ENCODE measurements at regions of chr16 and their contacts with region 1.

Region 1: GRCh38 chr16:23803591-23804123 is 32.1 kb upstream of the PRKCB start:
- DNase-seq: peak; percentile 78
- H3K4me3 ChIP-seq: peak overlapping the region in 1 of 4 donors; percentile 10
- H3K27ac ChIP-seq: no peak overlapping the region
- H3K4me1 ChIP-seq: peaks cover 0 to 6% (median 0%) of the 10 kb centered on the region in 4 donors
- H3K27me3 ChIP-seq: no peaks in the 10 kb centered on the region
- CTCF ChIP-seq: peak in 3 of 4 experiments; percentile 30 to 56 (median 35)
- EP300 ChIP-seq: no peak
- POLR2A ChIP-seq: no peak

Region 2: GRCh38 chr16:23728112-23728477 is 75.6 kb before region 1 on chr16:
- intact Hi-C with region 1: no loop called
- DNase-seq: no peak
- H3K4me3 ChIP-seq: no peak overlapping the region
- H3K27ac ChIP-seq: no peak overlapping the region
- H3K4me1 ChIP-seq: no peaks in the 10 kb centered on the region
- H3K27me3 ChIP-seq: peaks cover 0 to 13% (median 0%) of the 10 kb centered on the region in 3 donors
- CTCF ChIP-seq: no peak
- EP300 ChIP-seq: no peak
- POLR2A ChIP-seq: no peak

Region 3: DNA sequence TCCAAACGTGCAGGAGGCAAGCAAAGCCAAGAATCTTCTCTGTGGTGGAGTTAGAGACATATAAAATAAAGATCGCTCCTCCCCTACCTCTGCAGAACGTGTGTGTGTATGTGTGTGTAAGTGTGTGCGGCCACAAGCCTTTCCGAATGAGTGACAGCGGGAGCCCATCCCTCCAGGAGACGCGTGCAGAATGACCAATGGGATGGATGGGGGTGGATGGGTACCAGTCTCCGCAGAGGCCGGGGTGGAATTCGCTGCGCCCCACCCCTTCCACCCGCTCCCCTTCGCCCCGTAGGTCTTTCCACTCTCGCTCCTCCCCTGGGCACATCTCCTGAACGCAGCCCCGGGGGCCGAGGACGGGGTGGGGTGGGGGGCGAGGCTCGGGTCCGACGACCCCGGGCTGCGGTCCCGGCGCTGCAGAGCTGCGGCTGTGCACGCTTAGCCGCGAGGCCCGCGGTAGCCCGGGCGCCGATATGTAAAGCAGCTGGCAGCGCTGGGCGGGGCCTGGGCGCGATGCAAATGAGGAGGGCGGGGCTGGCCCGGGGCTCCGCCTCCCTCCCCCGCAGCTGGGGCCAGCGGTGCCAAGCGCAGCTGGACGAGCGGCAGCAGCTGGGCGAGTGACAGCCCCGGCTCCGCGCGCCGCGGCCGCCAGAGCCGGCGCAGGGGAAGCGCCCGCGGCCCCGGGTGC is 31.9 kb after region 1 on chr16 and contains the start of gene PRKCB:
- intact Hi-C with region 1: loop called (anchors 5 kb)
- DNase-seq: peak; percentile 89
- H3K4me3 ChIP-seq: peak within 1 kb of the TSS; percentile 56 to 83 (median 70)
- H3K27ac ChIP-seq: peak within 1 kb of the TSS in 3 of 4 donors; percentile 58 to 72 (median 60)
- H3K4me1 ChIP-seq: peaks cover 0 to 24% (median 18%) of the 10 kb centered on the region in 4 donors
- H3K27me3 ChIP-seq: no peaks in the 10 kb centered on the region
- CTCF ChIP-seq: no peak
- EP300 ChIP-seq: no peak
- POLR2A ChIP-seq: no peak
- total RNA-seq, gene PRKCB: 12.1 to 43.8 (median 23.8) TPM

Region 4: GRCh38 chr16:24010440-24011089 is 206.9 kb after region 1 on chr16:
- intact Hi-C with region 1: loop called (anchors 1 kb)
- DNase-seq: peak; percentile 87
- H3K4me3 ChIP-seq: no peak overlapping the region
- H3K27ac ChIP-seq: no peak overlapping the region
- H3K4me1 ChIP-seq: peaks cover 0 to 4% (median 2%) of the 10 kb centered on the region in 4 donors
- H3K27me3 ChIP-seq: no peaks in the 10 kb centered on the region
- CTCF ChIP-seq: peak; percentile 61 to 77 (median 72)
- EP300 ChIP-seq: no peak
- POLR2A ChIP-seq: no peak

Region 5: GRCh38 chr16:24036614-24037013 is 233.0 kb after region 1 on chr16:
- intact Hi-C with region 1: loop called (anchors 1 kb)
- DNase-seq: no peak
- H3K4me3 ChIP-seq: no peak overlapping the region
- H3K27ac ChIP-seq: no peak overlapping the region
- H3K4me1 ChIP-seq: no peaks in the 10 kb centered on the region
- H3K27me3 ChIP-seq: no peaks in the 10 kb centered on the region
- CTCF ChIP-seq: peak; percentile 50 to 78 (median 56)
- EP300 ChIP-seq: no peak
- POLR2A ChIP-seq: no peak

Region 6: DNA sequence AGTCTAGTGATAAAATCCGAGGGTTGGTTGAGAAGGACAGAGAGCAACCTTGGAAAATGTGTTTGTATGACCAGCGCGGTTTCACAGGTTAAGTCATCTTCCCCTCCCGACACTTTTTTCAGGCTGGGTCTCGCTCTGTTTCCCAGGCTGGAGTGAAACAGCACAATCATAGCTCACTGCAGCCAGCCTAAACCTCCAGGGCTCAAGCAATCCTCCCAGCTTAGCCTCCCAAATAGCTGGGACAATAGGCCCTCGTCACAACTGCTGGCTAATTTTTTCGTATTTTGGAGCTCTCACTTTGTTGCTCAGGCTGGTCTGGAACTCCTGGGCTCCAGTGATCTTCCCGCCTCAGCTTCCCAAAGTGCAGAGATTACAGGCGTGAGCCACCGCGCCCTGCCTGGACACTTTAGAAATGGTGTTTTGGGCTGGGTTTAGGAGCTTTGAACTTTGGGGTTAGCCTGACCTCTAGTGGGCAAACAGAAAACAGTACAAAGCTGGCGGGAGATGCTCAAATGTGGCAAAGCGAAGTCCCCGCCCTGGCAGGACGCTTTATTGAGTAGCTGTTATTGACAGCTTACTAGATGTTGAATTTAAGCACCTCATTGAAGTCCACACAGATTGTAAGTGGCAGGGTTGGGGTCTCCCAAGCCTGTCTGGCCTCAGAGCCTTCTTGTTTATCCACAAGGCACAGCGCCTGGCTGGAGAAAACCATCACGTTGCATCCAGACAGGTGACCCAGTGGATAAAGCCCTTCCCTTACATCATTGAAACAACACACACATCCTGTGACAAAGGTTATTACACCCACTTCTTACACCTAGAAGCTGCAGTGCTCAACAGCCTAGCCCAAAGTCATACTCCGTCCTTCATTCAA is 701.1 kb after region 1 on chr16:
- intact Hi-C with region 1: loop called (anchors 10 kb)
- DNase-seq: peak; percentile 66
- H3K4me3 ChIP-seq: no peak overlapping the region
- H3K27ac ChIP-seq: no peak overlapping the region
- H3K4me1 ChIP-seq: no peaks in the 10 kb centered on the region
- H3K27me3 ChIP-seq: no peaks in the 10 kb centered on the region
- CTCF ChIP-seq: peak; percentile 18 to 64 (median 52)
- EP300 ChIP-seq: no peak
- POLR2A ChIP-seq: no peak